Naive thymus-derived CD4-positive, alpha-beta T cell (primary cell): ENCODE measurements at regions of chr15 and their contacts with region 1.

Region 1: GRCh38 chr15:84929744-84930371 is 45.4 kb downstream of the SLC28A1 start:
- DNase-seq: no peak
- ATAC-seq: no peak
- H3K4me3 ChIP-seq: no peak overlapping the region
- H3K4me3 Mint-ChIP-seq: no peak overlapping the region
- H3K27ac ChIP-seq: no peak overlapping the region
- H3K27ac Mint-ChIP-seq: no peak overlapping the region
- H3K4me1 ChIP-seq: peaks cover 0 to 4% of the 10 kb centered on the region in 2 donors
- H3K4me1 Mint-ChIP-seq: peaks cover 5 to 8% (median 6%) of the 10 kb centered on the region in 7 donors
- H3K27me3 ChIP-seq: no peaks in the 10 kb centered on the region
- H3K27me3 Mint-ChIP-seq: no peaks in the 10 kb centered on the region

Region 2: DNA sequence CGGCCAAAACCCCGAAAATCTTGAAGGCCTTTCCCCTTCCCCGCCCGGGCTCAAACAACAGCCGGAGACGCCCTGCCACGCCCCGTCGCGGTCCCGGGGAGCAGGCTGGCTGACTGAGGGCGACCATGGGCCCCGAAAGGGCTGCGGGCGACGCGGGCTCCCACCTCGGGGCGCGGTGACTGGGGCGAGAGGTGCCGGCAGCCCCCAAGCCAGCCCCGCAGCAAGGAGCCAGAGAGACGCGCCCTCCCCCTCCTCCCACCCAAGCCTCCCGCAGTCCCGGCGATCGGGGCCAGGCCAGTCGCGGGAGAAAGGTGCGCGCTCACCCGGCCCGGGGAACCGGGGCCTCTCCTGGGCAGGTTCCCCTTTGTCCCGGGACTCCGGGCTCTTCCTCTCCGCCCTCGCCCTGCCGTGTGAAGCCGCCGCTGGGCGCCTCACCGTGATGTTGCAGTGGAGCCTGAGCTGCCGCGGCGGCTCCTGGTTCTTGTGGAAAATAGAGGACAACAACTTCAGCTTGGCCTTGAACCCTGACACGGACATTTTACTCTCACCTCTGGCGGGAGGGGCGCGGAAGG is 359.6 kb before region 1 on chr15:
- CTCF ChIA-PET with region 1: no interaction called
- POLR2A ChIA-PET with region 1: no interaction called
- intact Hi-C with region 1: loop called in 1 of 2 experiments (anchors 1 kb)
- DNase-seq: peak; percentile 13 to 68 (median 40)
- ATAC-seq: peak; percentile 63
- H3K4me3 ChIP-seq: peak overlapping the region; percentile 67
- H3K4me3 Mint-ChIP-seq: peak overlapping the region; percentile 78 to 97 (median 86)
- H3K27ac ChIP-seq: peak overlapping the region; percentile 67
- H3K27ac Mint-ChIP-seq: peak overlapping the region; percentile 65 to 93 (median 82)
- H3K4me1 ChIP-seq: peaks cover 0 to 5% of the 10 kb centered on the region in 2 donors
- H3K4me1 Mint-ChIP-seq: peaks cover 0 to 20% (median 10%) of the 10 kb centered on the region in 7 donors
- H3K27me3 ChIP-seq: no peaks in the 10 kb centered on the region
- H3K27me3 Mint-ChIP-seq: peaks cover 0 to 3% (median 0%) of the 10 kb centered on the region in 5 donors

Region 3: DNA sequence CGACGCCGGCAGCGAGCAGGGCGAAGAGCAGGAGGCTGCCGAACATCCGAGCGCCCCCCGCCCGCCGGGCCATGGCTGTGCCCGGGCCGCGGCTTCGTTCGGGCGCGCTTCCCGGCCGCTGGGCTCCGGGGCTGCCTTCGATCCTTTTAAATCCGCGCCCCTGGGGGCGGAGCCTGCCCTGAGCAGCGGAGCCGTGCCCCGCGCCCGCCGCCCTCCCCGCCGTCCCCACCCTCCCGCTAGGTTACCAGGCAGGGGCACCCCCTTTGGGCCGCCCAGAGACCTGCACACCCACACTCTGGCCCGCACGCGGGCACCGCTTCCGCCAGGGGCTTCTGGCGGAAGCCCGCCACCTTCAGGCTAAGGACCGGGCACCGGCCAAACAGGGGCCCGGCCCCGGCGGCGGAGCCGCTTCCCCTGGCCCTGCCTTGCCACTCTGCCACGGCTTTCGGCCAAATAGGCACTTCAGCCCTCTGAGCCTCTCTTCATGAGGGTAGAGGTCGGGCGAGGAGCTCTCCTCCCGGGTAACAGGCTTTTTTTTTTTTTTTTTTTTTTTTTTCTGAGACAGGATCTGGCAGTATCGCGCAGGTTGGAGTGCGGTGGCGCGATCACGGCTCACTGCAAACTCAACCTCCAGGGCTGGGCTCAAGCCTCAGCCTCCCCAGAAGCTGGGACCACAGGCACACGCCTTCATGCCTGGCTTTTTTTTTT is 271.6 kb before region 1 on chr15 and contains the start of gene NMB:
- CTCF ChIA-PET with region 1: interaction called, 3 read pairs
- POLR2A ChIA-PET with region 1: no interaction called
- intact Hi-C with region 1: loop called (anchors 1 kb)
- DNase-seq: peak; percentile 76 to 88 (median 87)
- ATAC-seq: peak; percentile 82
- H3K4me3 ChIP-seq: peak within 1 kb of the TSS; percentile 73
- H3K4me3 Mint-ChIP-seq: peak within 1 kb of the TSS; percentile 78 to 86 (median 83)
- H3K27ac ChIP-seq: peak within 1 kb of the TSS; percentile 76
- H3K27ac Mint-ChIP-seq: peak within 1 kb of the TSS; percentile 74 to 93 (median 84)
- H3K4me1 ChIP-seq: peaks cover 13 to 27% of the 10 kb centered on the region in 2 donors
- H3K4me1 Mint-ChIP-seq: peaks cover 13 to 47% (median 39%) of the 10 kb centered on the region in 7 donors
- H3K27me3 ChIP-seq: no peaks in the 10 kb centered on the region
- H3K27me3 Mint-ChIP-seq: no peaks in the 10 kb centered on the region
- total RNA-seq, gene NMB: 1.2 to 3.1 (median 2.9) TPM

Region 4: GRCh38 chr15:84883433-84883832 is 46.4 kb before region 1 on chr15:
- CTCF ChIA-PET with region 1: no interaction called
- POLR2A ChIA-PET with region 1: interaction called, 3 read pairs
- intact Hi-C with region 1: loop called in 1 of 2 experiments (anchors 1 kb)
- DNase-seq: no peak
- ATAC-seq: no peak
- H3K4me3 ChIP-seq: no peak overlapping the region
- H3K4me3 Mint-ChIP-seq: no peak overlapping the region
- H3K27ac ChIP-seq: no peak overlapping the region
- H3K27ac Mint-ChIP-seq: no peak overlapping the region
- H3K4me1 ChIP-seq: no peaks in the 10 kb centered on the region
- H3K4me1 Mint-ChIP-seq: no peaks in the 10 kb centered on the region
- H3K27me3 ChIP-seq: no peaks in the 10 kb centered on the region
- H3K27me3 Mint-ChIP-seq: peaks cover 0 to 10% (median 0%) of the 10 kb centered on the region in 5 donors

Region 5: GRCh38 chr15:84973492-84974460 is 43.9 kb after region 1 on chr15:
- CTCF ChIA-PET with region 1: no interaction called
- POLR2A ChIA-PET with region 1: no interaction called
- intact Hi-C with region 1: no loop called
- DNase-seq: no peak
- ATAC-seq: no peak
- H3K4me3 ChIP-seq: no peak overlapping the region
- H3K4me3 Mint-ChIP-seq: no peak overlapping the region
- H3K27ac ChIP-seq: no peak overlapping the region
- H3K27ac Mint-ChIP-seq: no peak overlapping the region
- H3K4me1 ChIP-seq: no peaks in the 10 kb centered on the region
- H3K4me1 Mint-ChIP-seq: peaks cover 0 to 4% (median 0%) of the 10 kb centered on the region in 7 donors
- H3K27me3 ChIP-seq: no peaks in the 10 kb centered on the region
- H3K27me3 Mint-ChIP-seq: peaks cover 0 to 26% (median 0%) of the 10 kb centered on the region in 5 donors

Region 6: DNA sequence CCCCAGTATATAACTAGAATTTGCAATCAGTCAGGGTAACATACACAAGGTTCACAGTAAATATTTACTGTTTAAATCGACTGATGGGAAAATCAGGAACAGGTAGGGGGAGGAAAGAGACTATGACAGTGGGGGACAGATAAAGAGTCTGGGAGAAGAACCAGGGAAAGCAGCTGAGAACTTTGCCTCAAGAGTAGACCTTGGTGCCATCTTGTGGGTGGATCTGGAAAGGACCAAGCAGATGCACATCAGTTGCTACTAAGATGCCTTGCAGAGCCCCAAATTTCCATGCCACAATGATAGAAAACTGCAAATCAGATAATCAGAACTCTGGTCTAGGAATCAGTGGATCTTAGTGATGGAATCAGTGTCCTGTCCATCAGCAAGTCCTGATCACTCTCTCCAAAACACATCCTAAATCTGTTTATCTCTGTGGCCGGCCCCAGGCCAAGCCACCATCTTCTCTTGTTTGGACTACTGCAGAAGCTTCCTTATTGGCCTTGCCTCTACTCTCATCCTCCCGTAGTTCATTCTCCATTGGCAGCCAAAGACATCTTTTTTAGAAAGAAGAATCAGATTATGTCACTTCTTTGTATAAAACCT is 114.5 kb after region 1 on chr15:
- CTCF ChIA-PET with region 1: interaction called, 3 read pairs
- POLR2A ChIA-PET with region 1: no interaction called
- intact Hi-C with region 1: loop called in 1 of 2 experiments (anchors 1 kb)
- DNase-seq: peak in 8 of 9 donors; percentile 15 to 43 (median 30)
- ATAC-seq: peak; percentile 61
- H3K4me3 ChIP-seq: no peak overlapping the region
- H3K4me3 Mint-ChIP-seq: no peak overlapping the region
- H3K27ac ChIP-seq: no peak overlapping the region
- H3K27ac Mint-ChIP-seq: peak overlapping the region in 3 of 9 donors; percentile 15 to 61 (median 53)
- H3K4me1 ChIP-seq: peaks cover 0 to 6% of the 10 kb centered on the region in 2 donors
- H3K4me1 Mint-ChIP-seq: peaks cover 7 to 44% (median 21%) of the 10 kb centered on the region in 7 donors
- H3K27me3 ChIP-seq: no peaks in the 10 kb centered on the region
- H3K27me3 Mint-ChIP-seq: no peaks in the 10 kb centered on the region